ENCODE measurements at regions of chr3 and their contacts with region 1.

Region 1: DNA sequence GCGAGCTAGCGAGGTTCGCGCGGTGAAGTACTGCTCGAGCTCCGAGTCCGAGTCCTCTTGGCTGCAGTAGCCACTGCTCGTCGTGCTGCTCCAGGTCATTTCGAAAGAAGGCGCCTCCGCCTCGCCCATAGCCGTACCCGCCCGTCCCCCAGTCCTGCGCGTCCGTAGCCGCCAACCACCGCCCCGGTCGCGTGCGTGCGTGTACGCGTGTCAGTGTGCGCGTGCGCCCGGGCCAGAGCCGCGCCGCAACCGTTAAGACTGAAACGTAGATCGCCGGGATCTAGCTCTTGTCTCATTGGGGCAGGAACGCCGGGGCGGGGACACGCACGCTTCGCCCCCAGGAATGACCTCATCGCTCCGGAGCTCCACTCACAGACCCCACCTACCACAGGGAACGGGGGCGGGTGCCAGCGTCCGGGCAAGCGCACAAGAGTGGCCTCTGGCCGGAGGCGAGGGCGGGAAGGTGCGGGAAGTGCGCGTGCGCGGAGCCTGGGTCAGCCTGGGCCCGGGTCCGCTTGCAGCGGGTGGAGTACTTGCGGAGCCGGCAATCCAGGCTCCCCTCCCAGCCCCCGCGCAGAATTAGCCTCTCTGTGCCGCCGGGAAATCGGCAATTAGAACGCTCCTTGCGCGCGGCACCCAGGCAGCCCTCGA is 3.3 kb downstream of the RASSF1 start:
- DNase-seq: peak; percentile 84 to 98 (median 92)
- ATAC-seq: peak; percentile 77 to 78
- H3K4me3 Mint-ChIP-seq: peak overlapping the region; percentile 86 to 98 (median 94)
- H3K27ac Mint-ChIP-seq: peak overlapping the region; percentile 94 to 99 (median 96)
- H3K4me1 Mint-ChIP-seq: peaks cover 34 to 79% (median 74%) of the 10 kb centered on the region in 4 donors
- H3K27me3 Mint-ChIP-seq: no peaks in the 10 kb centered on the region

Region 2: GRCh38 chr3:50154840-50155474 is 182.4 kb before region 1 on chr3 and contains the start of gene SEMA3F:
- POLR2A ChIA-PET with region 1: no interaction called
- DNase-seq: peak; percentile 32 to 78 (median 62)
- ATAC-seq: peak; percentile 90 to 92
- H3K4me3 Mint-ChIP-seq: peak within 1 kb of the TSS; percentile 73 to 90 (median 86)
- H3K27ac Mint-ChIP-seq: peak within 1 kb of the TSS in 3 of 10 donors; percentile 43 to 74 (median 63)
- H3K4me1 Mint-ChIP-seq: peaks cover 5 to 36% (median 12%) of the 10 kb centered on the region in 4 donors
- H3K27me3 Mint-ChIP-seq: peaks cover 14 to 43% (median 34%) of the 10 kb centered on the region in 5 donors
- polyA plus RNA-seq, gene SEMA3F: not detected

Region 3: DNA sequence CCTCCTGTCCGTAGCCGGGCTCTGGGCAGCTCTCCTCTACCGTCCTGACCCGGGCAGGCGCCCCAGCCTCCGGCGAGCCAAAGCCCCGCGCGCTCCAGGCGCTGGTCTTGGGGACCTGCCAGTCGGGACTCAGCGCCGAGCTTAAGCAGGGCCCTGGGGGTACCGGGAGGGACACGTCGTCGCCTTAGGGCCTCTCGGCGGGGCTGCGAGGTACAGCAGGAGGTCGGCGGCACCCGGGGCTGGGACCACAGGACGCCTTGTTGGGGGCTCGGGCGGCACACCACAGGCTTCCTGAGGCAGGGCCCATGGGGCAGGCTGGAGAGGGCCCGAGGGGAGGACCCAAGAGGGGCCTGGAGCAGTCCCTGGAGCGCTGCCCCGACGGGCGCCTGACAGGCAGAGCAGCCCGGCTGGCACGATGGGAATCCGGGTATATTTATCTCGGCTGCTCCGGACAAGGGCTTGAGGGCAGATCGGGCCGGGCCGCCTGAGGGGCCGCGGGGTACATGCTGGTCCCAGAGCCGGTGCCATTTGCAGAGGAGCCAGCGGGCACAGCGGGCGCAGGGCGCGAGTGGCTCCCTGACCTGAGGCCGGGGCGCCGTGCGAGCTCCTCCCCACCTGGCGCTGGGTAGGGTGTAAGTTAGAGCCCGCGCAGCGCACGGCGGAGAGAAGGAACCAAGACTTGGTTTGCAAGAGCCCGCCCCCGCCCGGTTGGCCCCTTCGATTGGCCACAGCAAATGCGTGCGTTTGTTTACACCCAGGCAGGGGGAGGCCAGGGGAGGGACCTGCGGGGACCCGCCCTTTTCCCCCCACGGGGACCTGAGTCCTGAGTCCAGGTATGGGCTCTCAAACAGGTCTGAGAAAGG is 131.7 kb before region 1 on chr3:
- POLR2A ChIA-PET with region 1: no interaction called
- DNase-seq: peak in 5 of 10 donors; percentile 27 to 46 (median 37)
- ATAC-seq: peak; percentile 75 to 78
- H3K4me3 Mint-ChIP-seq: peak overlapping the region in 8 of 10 donors; percentile 10 to 74 (median 45)
- H3K27ac Mint-ChIP-seq: no peak overlapping the region
- H3K4me1 Mint-ChIP-seq: peaks cover 0 to 15% (median 4%) of the 10 kb centered on the region in 4 donors
- H3K27me3 Mint-ChIP-seq: peaks cover 13 to 53% (median 35%) of the 10 kb centered on the region in 5 donors

Region 4: GRCh38 chr3:50235716-50236496 is 101.4 kb before region 1 on chr3 and contains the start of gene GNAI2:
- POLR2A ChIA-PET with region 1: interaction called, 12 read pairs
- DNase-seq: peak; percentile 93 to 100 (median 99)
- ATAC-seq: peak; percentile 88 to 91
- H3K4me3 Mint-ChIP-seq: peak within 1 kb of the TSS; percentile 94 to 99 (median 98)
- H3K27ac Mint-ChIP-seq: peak within 1 kb of the TSS; percentile 93 to 98 (median 96)
- H3K4me1 Mint-ChIP-seq: peaks cover 21 to 56% (median 45%) of the 10 kb centered on the region in 4 donors
- H3K27me3 Mint-ChIP-seq: no peaks in the 10 kb centered on the region
- polyA plus RNA-seq, gene GNAI2: 405 to 534 (median 417) TPM

Region 5: GRCh38 chr3:50272911-50273693 is 64.2 kb before region 1 on chr3:
- POLR2A ChIA-PET with region 1: no interaction called
- DNase-seq: peak; percentile 65 to 90 (median 82)
- ATAC-seq: peak; percentile 84 to 87
- H3K4me3 Mint-ChIP-seq: peak overlapping the region in 9 of 10 donors; percentile 52 to 84 (median 72)
- H3K27ac Mint-ChIP-seq: peak overlapping the region in 6 of 10 donors; percentile 37 to 79 (median 72)
- H3K4me1 Mint-ChIP-seq: peaks cover 16 to 29% (median 27%) of the 10 kb centered on the region in 4 donors
- H3K27me3 Mint-ChIP-seq: peaks cover 13 to 55% (median 25%) of the 10 kb centered on the region in 5 donors

Region 6: GRCh38 chr3:50298836-50299637 is 38.3 kb before region 1 on chr3 and contains the starts of genes HYAL3 and NAA80:
- POLR2A ChIA-PET with region 1: interaction called, 44 read pairs
- DNase-seq: peak; percentile 95 to 100 (median 99)
- ATAC-seq: peak; percentile 85 to 86
- H3K4me3 Mint-ChIP-seq: peak within 1 kb of the TSS; percentile 95 to 99 (median 97)
- H3K27ac Mint-ChIP-seq: peak within 1 kb of the TSS; percentile 95 to 100 (median 99)
- H3K4me1 Mint-ChIP-seq: peaks cover 19 to 41% (median 34%) of the 10 kb centered on the region in 4 donors
- H3K27me3 Mint-ChIP-seq: no peaks in the 10 kb centered on the region
- polyA plus RNA-seq, gene HYAL3: 2.5 to 3.8 (median 3.0) TPM
- polyA plus RNA-seq, gene NAA80: 10.8 to 18.7 (median 17.4) TPM

Region 7: DNA sequence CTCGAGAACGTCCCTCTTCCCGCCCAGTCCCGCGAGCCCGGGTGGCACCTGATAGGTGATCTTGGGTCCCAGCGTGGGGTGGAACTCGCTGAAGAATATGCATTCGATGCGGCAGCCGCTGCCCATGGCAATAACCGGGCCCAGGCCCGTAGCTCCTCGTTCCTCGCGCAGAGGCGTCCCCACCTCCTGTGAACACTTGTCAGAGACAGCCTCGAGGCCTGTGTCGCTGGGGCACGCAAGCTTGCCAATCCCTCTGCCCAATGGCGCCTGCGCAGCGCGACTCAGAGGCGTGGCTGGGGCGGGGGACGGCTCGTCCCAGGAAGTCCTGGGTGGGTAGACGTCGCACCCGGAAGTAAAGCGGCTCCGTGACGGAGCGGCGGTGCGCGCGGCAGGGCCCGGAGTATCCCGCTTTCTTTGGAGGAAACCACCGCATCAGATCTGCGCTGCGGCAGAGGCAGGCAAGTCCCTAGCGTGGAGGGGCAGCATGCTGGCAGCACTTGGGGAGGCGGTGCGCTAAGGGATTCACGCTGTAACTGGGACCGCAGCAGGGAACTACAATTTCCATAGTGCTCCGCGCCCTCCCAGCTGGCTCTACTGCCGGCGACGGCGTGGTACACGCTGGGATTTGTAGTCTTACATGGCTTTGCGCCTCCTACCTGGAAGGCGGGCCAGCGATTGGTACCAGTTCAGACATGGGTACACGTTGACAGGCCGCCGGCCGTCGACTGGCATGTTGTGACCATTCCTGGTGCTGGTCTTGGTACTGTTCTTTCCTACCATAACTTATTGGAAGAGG is 13.4 kb after region 1 on chr3 and contains the starts of genes CYB561D2 and NPRL2:
- POLR2A ChIA-PET with region 1: interaction called, 318 read pairs
- DNase-seq: peak; percentile 97 to 99 (median 99)
- ATAC-seq: peak; percentile 89 to 90
- H3K4me3 Mint-ChIP-seq: peak within 1 kb of the TSS; percentile 94 to 99 (median 97)
- H3K27ac Mint-ChIP-seq: peak within 1 kb of the TSS; percentile 98 to 100 (median 99)
- H3K4me1 Mint-ChIP-seq: peaks cover 34 to 82% (median 68%) of the 10 kb centered on the region in 4 donors
- H3K27me3 Mint-ChIP-seq: no peaks in the 10 kb centered on the region
- polyA plus RNA-seq, gene CYB561D2: 45.5 to 48.2 (median 47.7) TPM
- polyA plus RNA-seq, gene NPRL2: 36.2 to 45.3 (median 36.4) TPM

Region 8: DNA sequence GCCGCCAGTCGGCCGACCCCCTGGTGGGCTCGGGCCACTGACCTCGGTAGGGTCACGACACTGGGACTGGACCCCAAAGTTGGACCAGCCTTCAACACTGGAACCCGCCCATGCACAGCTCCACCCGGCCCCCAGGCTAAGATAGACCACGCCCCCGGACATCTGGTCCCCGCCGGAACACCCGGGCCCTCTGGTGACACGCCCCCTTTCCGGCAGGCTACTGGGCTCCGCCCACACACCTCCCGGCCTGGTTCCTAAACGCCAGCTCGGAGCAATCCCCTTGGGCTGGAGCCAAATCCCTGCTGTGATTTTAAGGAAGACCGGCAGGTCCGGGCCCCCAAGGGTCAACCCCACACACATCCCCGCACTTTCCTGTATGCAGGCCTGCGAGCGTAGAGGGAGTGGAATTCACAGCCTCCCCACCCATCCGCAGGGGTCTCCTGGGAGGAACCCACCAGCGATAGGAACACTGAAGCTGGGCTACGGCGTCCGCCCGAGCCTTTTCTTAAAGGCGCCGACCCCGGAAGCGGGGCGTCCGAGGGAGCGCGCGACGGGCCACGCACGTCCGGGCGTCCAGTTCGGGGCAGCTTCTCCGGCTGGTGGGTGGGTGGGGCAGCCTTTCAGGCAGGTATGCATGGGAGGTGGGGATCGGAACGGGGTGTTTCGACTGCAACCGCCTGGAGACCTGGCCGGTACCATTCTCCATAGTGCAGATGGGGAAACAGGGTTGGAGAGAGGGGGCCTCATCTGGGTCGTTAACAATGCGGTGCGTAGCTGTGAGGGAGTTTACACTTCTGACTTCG is 231.8 kb after region 1 on chr3 and contains the start of gene HEMK1:
- POLR2A ChIA-PET with region 1: interaction called, 17 read pairs
- DNase-seq: peak; percentile 88 to 96 (median 93)
- ATAC-seq: peak; percentile 62 to 67
- H3K4me3 Mint-ChIP-seq: peak within 1 kb of the TSS; percentile 92 to 98 (median 97)
- H3K27ac Mint-ChIP-seq: peak within 1 kb of the TSS; percentile 93 to 98 (median 96)
- H3K4me1 Mint-ChIP-seq: peaks cover 36 to 79% (median 72%) of the 10 kb centered on the region in 4 donors
- H3K27me3 Mint-ChIP-seq: no peaks in the 10 kb centered on the region
- polyA plus RNA-seq, gene HEMK1: 20.2 to 43.1 (median 30.3) TPM

Measured in naive thymus-derived CD8-positive, alpha-beta T cell (primary cell).